Heart left ventricle (tissue), 16 donors: ENCODE measurements at regions of chr1 and their contacts with region 1.

Region 1: GRCh38 chr1:33367485-33368405 is 46.8 kb upstream of the A3GALT2 start:
- DNase-seq: peak; percentile 88 to 93 (median 88)
- ATAC-seq: peak; percentile 45 to 76 (median 68)
- H3K4me3 ChIP-seq: no peak overlapping the region
- H3K27ac ChIP-seq: peak overlapping the region in 11 of 12 donors; percentile 66 to 92 (median 81)
- H3K4me1 ChIP-seq: peaks cover 17 to 70% (median 54%) of the 10 kb centered on the region in 12 donors
- H3K27me3 ChIP-seq: no peaks in the 10 kb centered on the region
- CTCF ChIP-seq: peak; percentile 94 to 99 (median 96)
- POLR2A ChIP-seq: no peak

Region 2: DNA sequence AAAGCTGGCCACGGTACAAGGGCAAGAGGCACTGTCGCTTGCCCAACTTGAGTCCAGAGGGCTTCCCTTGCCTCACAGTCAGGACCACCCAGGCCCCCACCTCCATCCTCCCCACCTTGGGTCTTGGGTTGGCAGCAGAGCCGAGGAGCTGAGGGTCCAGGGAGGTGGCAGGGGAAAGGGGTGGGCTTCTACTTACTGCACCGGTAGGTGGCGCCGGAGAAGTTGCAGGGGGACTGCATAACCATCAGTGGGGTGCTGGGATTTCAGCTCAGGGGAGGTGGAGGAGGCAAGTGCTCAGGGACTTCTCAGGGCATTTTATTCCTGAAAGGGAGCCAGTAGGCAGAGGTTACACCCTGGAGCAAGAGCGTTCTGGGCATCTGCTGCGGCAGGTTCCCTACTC is 229.9 kb before region 1 on chr1:
- intact Hi-C with region 1: loop called in 8 of 10 experiments (anchors 2 to 10 kb)
- DNase-seq: peak in 3 of 5 donors; percentile 42 to 64 (median 47)
- ATAC-seq: peak in 2 of 4 donors; percentile 48 to 50
- H3K4me3 ChIP-seq: no peak overlapping the region
- H3K27ac ChIP-seq: no peak overlapping the region
- H3K4me1 ChIP-seq: peaks cover 0 to 13% (median 0%) of the 10 kb centered on the region in 12 donors
- H3K27me3 ChIP-seq: no peaks in the 10 kb centered on the region
- CTCF ChIP-seq: peak; percentile 31 to 64 (median 52)
- POLR2A ChIP-seq: no peak

Region 3: DNA sequence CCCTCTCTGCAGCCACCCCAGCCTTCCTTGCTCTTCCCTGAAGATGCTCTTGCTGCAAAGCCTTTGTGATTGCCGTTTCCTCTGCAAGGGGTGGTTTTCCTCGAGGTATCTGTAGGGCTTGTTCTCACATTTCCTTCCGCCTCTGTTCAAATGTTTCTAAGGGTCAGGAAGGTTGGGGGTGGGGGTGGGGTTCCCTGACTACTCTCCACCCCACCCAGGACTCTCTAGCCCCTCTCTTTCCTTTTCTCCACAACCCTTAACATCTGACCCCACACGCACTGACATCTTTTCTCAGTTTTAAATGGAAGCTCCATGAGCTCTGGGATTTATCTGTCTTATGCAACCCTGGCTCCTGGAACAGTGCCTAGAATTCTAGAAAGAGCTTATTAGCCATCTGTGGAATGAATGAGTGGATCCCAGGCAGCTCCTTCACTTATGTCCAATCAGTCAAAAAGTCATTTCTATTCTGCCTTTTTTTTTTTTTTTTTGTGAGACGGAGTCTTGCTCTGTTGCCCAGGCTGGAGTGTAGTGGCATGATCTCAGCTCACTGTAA is 138.7 kb before region 1 on chr1:
- intact Hi-C with region 1: loop called in 3 of 10 experiments (anchors 5 to 10 kb)
- DNase-seq: peak in 4 of 5 donors; percentile 37 to 76 (median 54)
- ATAC-seq: peak; percentile 55 to 92 (median 89)
- H3K4me3 ChIP-seq: no peak overlapping the region
- H3K27ac ChIP-seq: peak overlapping the region in 5 of 12 donors; percentile 2 to 35 (median 7)
- H3K4me1 ChIP-seq: peaks cover 0 to 29% (median 9%) of the 10 kb centered on the region in 12 donors
- H3K27me3 ChIP-seq: no peaks in the 10 kb centered on the region
- CTCF ChIP-seq: no peak
- POLR2A ChIP-seq: no peak

Region 4: GRCh38 chr1:33349778-33350610 is 17.8 kb before region 1 on chr1:
- intact Hi-C with region 1: loop called in 1 of 10 experiments (anchors 2 kb)
- DNase-seq: peak; percentile 89 to 94 (median 93)
- ATAC-seq: peak; percentile 81 to 93 (median 88)
- H3K4me3 ChIP-seq: peak overlapping the region; percentile 23 to 99 (median 87)
- H3K27ac ChIP-seq: peak overlapping the region; percentile 86 to 100 (median 98)
- H3K4me1 ChIP-seq: peaks cover 5 to 51% (median 40%) of the 10 kb centered on the region in 12 donors
- H3K27me3 ChIP-seq: no peaks in the 10 kb centered on the region
- CTCF ChIP-seq: peak in 1 of 12 donors; percentile 12
- POLR2A ChIP-seq: peak in 1 of 2 donors; percentile 79

Region 5: DNA sequence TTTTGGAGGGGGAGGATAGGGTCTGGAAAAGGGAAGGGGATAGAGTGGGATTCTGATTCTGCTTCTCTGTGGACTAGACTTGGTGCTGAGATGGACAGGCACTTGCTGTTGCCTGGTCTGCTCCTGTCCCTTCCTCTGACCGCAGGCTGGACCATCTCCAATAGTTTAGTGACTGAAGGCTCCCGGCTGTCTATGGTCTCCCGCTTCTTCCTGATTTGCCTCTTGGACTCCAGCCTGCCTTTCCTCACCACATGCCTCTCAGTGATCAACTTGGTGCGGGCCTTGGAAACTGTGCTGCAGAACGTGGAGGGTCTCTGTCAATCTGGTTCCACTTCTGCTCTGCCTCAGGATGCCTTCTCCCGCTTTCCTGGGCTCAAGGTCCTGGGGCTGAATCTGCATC is 98.4 kb after region 1 on chr1:
- intact Hi-C with region 1: loop called in 6 of 10 experiments (anchors 5 kb)
- DNase-seq: peak in 4 of 5 donors; percentile 56 to 72 (median 65)
- ATAC-seq: peak in 2 of 4 donors; percentile 25 to 29
- H3K4me3 ChIP-seq: no peak overlapping the region
- H3K27ac ChIP-seq: peak overlapping the region in 2 of 12 donors; percentile 7 to 12
- H3K4me1 ChIP-seq: peaks cover 0 to 48% (median 26%) of the 10 kb centered on the region in 12 donors
- H3K27me3 ChIP-seq: no peaks in the 10 kb centered on the region
- CTCF ChIP-seq: no peak
- POLR2A ChIP-seq: no peak

Region 6: GRCh38 chr1:33616773-33617172 is 249.0 kb after region 1 on chr1:
- intact Hi-C with region 1: loop called in 7 of 10 experiments (anchors 1 to 10 kb)
- DNase-seq: no peak
- ATAC-seq: no peak
- H3K4me3 ChIP-seq: no peak overlapping the region
- H3K27ac ChIP-seq: no peak overlapping the region
- H3K4me1 ChIP-seq: peaks cover 0 to 6% (median 0%) of the 10 kb centered on the region in 12 donors
- H3K27me3 ChIP-seq: peaks cover 0 to 13% (median 0%) of the 10 kb centered on the region in 9 donors
- CTCF ChIP-seq: no peak
- POLR2A ChIP-seq: no peak